Activated naive CD4-positive, alpha-beta T cell treated with anti-CD3 and anti-CD28 coated beads for 36 hours (primary cell): ENCODE measurements at regions of chr18 and their contacts with region 1.

Region 1: DNA sequence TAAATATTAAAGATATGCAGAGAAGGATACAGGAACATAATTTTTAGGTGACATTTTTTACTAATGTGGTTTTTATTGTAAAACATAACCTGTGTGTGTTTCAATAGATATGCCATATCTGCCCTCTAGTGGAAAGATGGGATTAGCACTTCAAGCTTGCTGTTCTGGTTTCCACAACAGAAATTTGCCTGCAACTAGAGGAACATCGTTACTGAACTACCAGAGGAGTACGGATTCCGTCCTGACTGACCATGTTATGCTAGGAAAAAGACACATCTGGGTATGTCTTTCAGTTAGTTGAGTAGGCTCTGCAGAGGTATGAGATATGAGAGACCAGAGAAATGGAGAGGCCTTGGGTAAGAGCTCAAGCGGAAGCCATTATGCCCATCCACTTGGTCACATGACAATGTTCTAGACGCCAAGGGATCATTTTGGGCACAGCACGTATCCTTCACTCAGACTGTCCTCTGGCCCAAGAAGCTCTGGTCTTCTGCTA is 104.9 kb downstream of the MBD2 start:
- DNase-seq: peak; percentile 17
- H3K4me3 Mint-ChIP-seq: peak overlapping the region; percentile 48
- H3K27ac Mint-ChIP-seq: no peak overlapping the region
- H3K4me1 Mint-ChIP-seq: peaks cover 2% of the 10 kb centered on the region
- H3K27me3 Mint-ChIP-seq: no peaks in the 10 kb centered on the region

Region 2: GRCh38 chr18:53567929-53568574 is 551.5 kb before region 1 on chr18:
- CTCF ChIA-PET with region 1: interaction called, 11 read pairs
- intact Hi-C with region 1: loop called (anchors 1 kb)
- DNase-seq: no peak
- H3K4me3 Mint-ChIP-seq: no peak overlapping the region
- H3K27ac Mint-ChIP-seq: no peak overlapping the region
- H3K4me1 Mint-ChIP-seq: no peaks in the 10 kb centered on the region
- H3K27me3 Mint-ChIP-seq: peaks cover 3% of the 10 kb centered on the region

Region 3: GRCh38 chr18:53698907-53699306 is 420.7 kb before region 1 on chr18:
- CTCF ChIA-PET with region 1: no interaction called
- intact Hi-C with region 1: loop called (anchors 1 kb)
- DNase-seq: peak; percentile 7
- H3K4me3 Mint-ChIP-seq: no peak overlapping the region
- H3K27ac Mint-ChIP-seq: no peak overlapping the region
- H3K4me1 Mint-ChIP-seq: no peaks in the 10 kb centered on the region
- H3K27me3 Mint-ChIP-seq: no peaks in the 10 kb centered on the region

Region 4: GRCh38 chr18:53909668-53910067 is 209.9 kb before region 1 on chr18:
- CTCF ChIA-PET with region 1: interaction called, 6 read pairs
- intact Hi-C with region 1: loop called (anchors 1 kb)
- DNase-seq: peak; percentile 30
- H3K4me3 Mint-ChIP-seq: no peak overlapping the region
- H3K27ac Mint-ChIP-seq: no peak overlapping the region
- H3K4me1 Mint-ChIP-seq: no peaks in the 10 kb centered on the region
- H3K27me3 Mint-ChIP-seq: peaks cover under 1% of the 10 kb centered on the region

Region 5: DNA sequence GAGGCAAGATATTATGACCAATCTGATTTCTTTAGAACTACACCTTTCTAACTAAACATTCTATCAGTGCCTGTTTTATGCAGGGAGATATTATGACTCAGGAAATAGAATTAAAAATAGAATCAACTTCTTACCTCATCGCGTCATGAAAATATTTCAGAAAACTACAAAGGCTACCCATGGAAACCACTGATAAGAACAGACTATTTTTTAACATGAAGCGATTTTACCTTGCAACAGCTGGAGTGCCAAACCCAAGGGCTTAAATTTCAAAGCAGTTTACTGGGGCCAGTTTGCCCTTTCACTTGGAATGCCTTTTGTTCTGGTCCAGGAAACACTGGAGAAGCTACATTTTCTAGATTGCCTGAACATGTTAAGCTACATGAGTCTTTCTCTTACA is 1144.5 kb after region 1 on chr18:
- CTCF ChIA-PET with region 1: no interaction called
- intact Hi-C with region 1: no loop called
- DNase-seq: no peak
- H3K4me3 Mint-ChIP-seq: no peak overlapping the region
- H3K27ac Mint-ChIP-seq: no peak overlapping the region
- H3K4me1 Mint-ChIP-seq: no peaks in the 10 kb centered on the region
- H3K27me3 Mint-ChIP-seq: no peaks in the 10 kb centered on the region